GM12878 (cell line): ENCODE measurements at regions of chr22 and their contacts with region 1.

Region 1: DNA sequence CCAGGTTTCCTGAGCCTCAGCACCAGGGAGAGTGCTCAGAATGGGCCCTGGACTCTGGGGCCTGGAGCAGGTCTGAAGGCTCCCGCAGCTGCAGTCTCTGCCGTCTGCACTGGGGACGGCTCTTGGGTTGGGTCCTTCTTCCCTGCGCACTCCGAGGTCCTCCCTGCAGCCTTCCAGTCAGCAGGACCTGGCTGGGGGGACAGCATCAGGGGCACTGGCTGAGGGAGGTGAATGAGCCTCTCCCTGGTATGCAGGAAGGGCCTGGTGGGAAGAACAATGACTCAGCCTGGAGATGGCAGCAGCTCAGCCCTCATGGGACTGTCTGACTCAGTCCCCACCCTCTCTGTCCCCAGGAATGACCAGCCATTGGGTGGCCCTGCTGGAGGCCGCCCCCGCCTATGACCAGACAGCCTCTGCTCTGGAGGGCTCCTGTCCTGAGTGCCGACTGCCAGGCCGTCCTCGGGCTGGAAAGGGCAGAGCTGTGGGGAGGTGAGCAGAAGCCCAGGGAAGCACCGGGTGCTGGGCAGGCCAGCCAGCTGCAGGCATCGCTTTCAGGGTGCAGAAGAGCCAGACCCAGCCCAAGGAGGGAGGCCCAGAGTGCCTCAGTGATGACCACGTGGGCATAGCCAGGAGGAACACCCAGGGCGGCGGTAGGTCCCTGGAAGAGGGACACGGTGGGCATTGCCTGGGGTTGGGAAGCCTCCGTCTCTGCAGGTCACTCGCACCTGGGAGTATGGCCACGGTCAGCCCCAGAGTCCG is 455.0 kb downstream of the BRD1 start:
- DNase-seq: no peak
- ATAC-seq: no peak
- H3K4me3 ChIP-seq: no peak overlapping the region
- H3K27ac ChIP-seq: no peak overlapping the region
- H3K4me1 ChIP-seq: no peaks in the 10 kb centered on the region
- H3K27me3 ChIP-seq: no peaks in the 10 kb centered on the region
- CTCF ChIP-seq: no peak
- EP300 ChIP-seq: no peak
- POLR2A ChIP-seq: no peak
- RAD21 ChIP-seq: no peak

Region 2: DNA sequence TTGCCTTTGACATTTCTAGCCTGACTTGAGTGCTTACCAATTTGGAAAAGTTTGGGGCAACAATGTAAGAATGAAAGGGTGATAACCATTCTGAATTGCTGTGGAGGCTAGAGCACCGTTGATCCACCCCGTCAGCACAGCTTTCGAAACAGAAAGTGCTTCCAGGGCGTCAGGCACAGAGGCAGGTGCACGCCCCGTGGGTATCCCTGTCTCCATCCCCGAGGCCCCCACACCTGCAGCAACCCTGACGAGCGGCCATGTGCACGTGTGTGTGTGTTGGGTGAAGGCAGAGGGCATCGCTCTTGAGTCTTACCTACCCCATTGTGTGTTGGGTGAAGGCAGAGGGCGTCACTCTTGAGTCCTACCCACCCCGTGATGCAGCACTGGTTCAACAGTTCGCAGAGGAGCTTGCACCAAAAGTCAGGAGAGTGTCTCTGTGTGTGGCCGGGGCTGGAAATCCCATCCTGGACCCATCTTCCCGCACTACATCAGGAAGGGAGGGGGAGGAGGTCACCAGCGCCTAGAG is 50.5 kb after region 1 on chr22:
- CTCF ChIA-PET with region 1: no interaction called
- POLR2A ChIA-PET with region 1: no interaction called
- RAD21 ChIA-PET with region 1: no interaction called
- SMC1A ChIA-PET with region 1: no interaction called
- in situ Hi-C with region 1: no loop called
- intact Hi-C with region 1: no loop called
- DNase-seq: no peak
- ATAC-seq: no peak
- H3K4me3 ChIP-seq: no peak overlapping the region
- H3K27ac ChIP-seq: no peak overlapping the region
- H3K4me1 ChIP-seq: no peaks in the 10 kb centered on the region
- H3K27me3 ChIP-seq: no peaks in the 10 kb centered on the region
- CTCF ChIP-seq: no peak
- EP300 ChIP-seq: no peak
- POLR2A ChIP-seq: no peak
- RAD21 ChIP-seq: no peak

Region 3: DNA sequence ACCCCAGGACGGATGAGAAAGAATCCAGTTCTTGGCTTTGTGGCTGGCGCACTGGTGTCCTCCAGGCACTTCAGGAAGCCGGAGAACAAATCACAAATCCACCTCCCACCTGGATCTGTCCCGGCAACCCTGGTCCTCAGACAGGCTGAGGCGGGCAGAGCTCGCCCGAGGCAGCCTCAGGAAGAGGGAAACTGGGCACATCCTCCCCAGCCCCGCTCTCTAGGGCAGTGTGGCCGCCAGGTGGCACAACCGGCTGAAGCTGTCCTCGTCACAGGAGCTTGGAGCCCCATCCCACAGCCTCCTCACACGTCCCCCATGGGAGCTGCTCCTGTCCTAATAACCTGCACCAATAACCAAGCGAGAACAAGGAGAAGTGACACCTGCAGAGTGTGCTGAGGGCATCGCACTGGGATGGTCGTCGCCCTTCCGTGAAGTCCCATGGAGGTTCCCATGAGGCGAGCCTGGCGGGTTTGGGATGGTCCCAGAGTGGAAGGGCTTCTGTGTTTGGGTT is 61.4 kb after region 1 on chr22:
- CTCF ChIA-PET with region 1: no interaction called
- POLR2A ChIA-PET with region 1: no interaction called
- RAD21 ChIA-PET with region 1: no interaction called
- SMC1A ChIA-PET with region 1: no interaction called
- in situ Hi-C with region 1: loop called (anchors 10 kb)
- intact Hi-C with region 1: no loop called
- DNase-seq: no peak
- ATAC-seq: no peak
- H3K4me3 ChIP-seq: no peak overlapping the region
- H3K27ac ChIP-seq: no peak overlapping the region
- H3K4me1 ChIP-seq: no peaks in the 10 kb centered on the region
- H3K27me3 ChIP-seq: no peaks in the 10 kb centered on the region
- CTCF ChIP-seq: no peak
- EP300 ChIP-seq: no peak
- POLR2A ChIP-seq: no peak
- RAD21 ChIP-seq: no peak